Lower leg skin (tissue), 4 donors: ENCODE measurements at regions of chr1 and their contacts with region 1.

Region 1: DNA sequence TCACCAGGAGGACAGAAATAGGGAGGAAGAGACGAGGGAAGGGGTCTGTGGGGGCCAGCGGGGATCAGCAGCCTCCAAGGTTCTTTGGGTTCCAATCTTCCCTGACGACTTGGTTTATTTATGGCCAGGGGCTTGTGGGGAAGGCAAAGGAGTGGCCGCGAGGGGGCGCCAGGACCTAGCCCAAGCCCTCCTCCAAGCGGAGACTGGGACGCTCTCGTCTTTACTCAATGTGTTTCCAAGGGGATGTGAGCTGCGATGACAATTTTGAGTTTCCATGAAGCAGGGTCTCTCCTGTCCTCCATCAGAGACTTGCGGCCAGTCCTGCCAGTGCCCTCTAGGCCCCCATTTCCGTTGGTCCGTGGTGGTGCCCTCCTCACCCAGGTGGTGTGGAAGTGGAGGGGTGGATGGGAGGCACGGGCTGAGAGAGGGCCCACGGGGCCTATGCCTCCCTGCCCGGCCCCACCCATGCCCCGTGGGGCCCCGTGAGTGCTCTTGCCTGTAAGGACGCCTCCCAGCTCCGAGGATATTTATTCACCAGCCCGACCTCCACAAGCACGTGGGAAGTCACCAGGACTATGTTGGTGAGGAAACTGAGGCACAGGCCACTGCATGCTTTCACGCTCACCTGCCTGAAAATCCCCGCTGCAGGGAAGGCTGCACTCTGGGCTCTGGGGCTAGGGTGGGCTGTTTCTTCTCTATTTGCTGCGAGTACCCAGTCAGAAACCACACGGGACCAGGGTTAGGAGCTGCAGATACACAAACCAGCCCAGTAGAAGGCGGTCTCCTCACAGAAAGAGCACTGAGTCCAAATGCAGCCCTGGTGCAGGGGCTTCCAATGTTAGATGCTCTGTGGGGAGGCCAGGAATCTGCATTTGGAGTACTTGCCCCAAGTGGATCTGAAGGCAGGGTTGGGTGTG is 26.5 kb downstream of the DMRTB1 start:
- DNase-seq: peak; percentile 64 to 96
- H3K4me3 ChIP-seq: no peak overlapping the region
- CTCF ChIP-seq: peak in 1 of 3 donors; percentile 38
- POLR2A ChIP-seq: no peak

Region 2: GRCh38 chr1:53592521-53592982 is 106.8 kb after region 1 on chr1:
- intact Hi-C with region 1: loop called (anchors 10 kb)
- DNase-seq: no peak
- H3K4me3 ChIP-seq: no peak overlapping the region
- CTCF ChIP-seq: no peak
- POLR2A ChIP-seq: no peak

Region 3: DNA sequence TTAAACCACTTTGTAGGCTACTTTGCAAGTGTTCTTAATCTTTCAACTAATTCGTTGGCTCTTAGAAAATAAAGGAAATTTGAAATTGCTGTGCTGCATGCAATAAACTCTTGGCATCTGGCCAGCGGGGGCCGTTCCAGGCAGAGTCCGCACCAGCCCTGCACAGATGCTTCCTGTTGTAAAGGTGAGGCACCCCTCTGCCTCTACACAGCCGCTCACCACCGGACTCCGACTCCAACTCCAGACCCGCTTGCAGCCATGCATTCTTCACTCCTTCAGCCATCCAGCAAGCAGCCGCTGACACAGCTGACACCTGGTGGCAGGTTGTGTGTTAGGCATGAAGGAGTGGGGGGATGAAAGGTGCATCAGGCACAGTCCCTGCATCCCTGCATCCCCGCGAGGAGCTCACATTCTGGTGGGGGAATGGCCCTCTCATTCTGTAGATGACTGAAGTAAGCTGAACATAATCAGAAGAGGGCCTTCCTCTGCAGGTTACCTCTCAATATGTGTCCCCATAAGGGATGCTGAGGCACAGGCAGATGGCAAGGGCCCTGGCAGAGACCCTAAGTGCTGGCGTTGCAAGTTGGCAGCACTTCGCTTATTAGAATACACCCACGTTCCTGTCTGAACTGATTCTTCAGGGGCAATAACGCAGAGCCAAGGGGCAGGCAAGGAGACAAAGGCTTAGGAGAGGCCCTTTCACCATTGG is 196.4 kb after region 1 on chr1:
- intact Hi-C with region 1: loop called (anchors 5 kb)
- DNase-seq: peak; percentile 23 to 91
- H3K4me3 ChIP-seq: no peak overlapping the region
- CTCF ChIP-seq: no peak
- POLR2A ChIP-seq: no peak

Region 4: GRCh38 chr1:53754484-53755312 is 269.0 kb after region 1 on chr1:
- intact Hi-C with region 1: loop called (anchors 2 kb)
- DNase-seq: peak in 1 of 2 donors; percentile 55
- H3K4me3 ChIP-seq: no peak overlapping the region
- CTCF ChIP-seq: no peak
- POLR2A ChIP-seq: no peak

Region 5: GRCh38 chr1:53860967-53861411 is 375.3 kb after region 1 on chr1:
- intact Hi-C with region 1: no loop called
- DNase-seq: no peak
- H3K4me3 ChIP-seq: no peak overlapping the region
- CTCF ChIP-seq: no peak
- POLR2A ChIP-seq: no peak

Region 6: GRCh38 chr1:54239631-54240031 is 753.9 kb after region 1 on chr1:
- intact Hi-C with region 1: no loop called
- DNase-seq: no peak
- H3K4me3 ChIP-seq: no peak overlapping the region
- CTCF ChIP-seq: no peak
- POLR2A ChIP-seq: no peak